ENCODE measurements at regions of chr5 and their contacts with region 1.

Region 1: DNA sequence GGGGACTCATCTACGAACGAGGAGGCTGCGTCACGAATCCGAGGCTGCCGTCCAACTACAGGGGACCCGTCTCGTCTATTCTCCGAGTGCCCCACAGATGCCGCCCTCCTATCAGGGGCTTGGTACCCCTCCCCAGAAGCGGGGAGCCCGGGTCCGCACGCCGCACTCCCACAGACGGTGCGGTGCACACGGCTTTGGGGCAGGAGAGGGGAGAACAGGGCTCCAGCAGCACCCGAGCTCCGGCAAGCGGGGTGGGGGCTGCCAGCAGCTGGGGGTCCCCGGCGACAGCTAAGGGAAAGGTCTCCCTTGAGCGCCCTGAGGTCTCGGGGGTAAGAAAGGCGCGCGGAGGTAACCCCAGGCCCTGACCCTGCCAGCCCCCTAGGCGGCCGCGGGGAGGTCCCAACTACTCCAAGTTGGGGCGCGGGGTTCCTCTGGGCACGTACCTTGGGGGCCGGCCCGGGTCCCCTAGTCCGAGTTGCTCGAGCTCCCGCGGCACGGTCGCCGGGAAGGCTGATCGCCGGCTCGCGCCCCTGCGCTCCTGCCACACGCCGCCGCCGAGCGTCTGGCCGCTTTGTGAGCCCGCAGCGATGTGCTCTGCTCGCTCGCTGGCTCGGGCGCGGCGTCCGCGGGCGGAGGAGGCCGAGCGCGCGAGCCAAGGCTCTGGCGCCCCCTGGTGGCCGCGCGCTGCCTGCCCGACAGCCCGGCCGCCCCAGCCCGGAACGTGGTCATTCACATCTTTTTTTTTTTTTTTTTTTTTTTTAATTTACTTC is at the start of gene SPOCK1:
- DNase-seq: peak; percentile 75 to 80
- ATAC-seq: peak; percentile 91 to 97
- H3K4me3 ChIP-seq: peak within 1 kb of the TSS; percentile 54
- H3K27ac ChIP-seq: peak within 1 kb of the TSS; percentile 60 to 83
- H3K4me1 ChIP-seq: no peaks in the 10 kb centered on the region
- CTCF ChIP-seq: peak; percentile 89
- EP300 ChIP-seq: no peak
- POLR2A ChIP-seq: no peak
- RAD21 ChIP-seq: peak; percentile 72 to 94
- polyA plus RNA-seq, gene SPOCK1: 33.8 and 40.8 TPM in 2 replicates

Region 2: GRCh38 chr5:137310051-137310730 is 188.7 kb before region 1 on chr5:
- CTCF ChIA-PET with region 1: interaction called, 11 read pairs
- POLR2A ChIA-PET with region 1: no interaction called
- DNase-seq: peak; percentile 44 to 72
- ATAC-seq: peak; percentile 71 to 81
- H3K4me3 ChIP-seq: no peak overlapping the region
- H3K27ac ChIP-seq: peak overlapping the region in 1 of 2 experiments; percentile 70; a peak in 3 of 6 replicates
- H3K4me1 ChIP-seq: peaks cover 35% of the 10 kb centered on the region
- CTCF ChIP-seq: no peak
- EP300 ChIP-seq: no peak
- POLR2A ChIP-seq: no peak
- RAD21 ChIP-seq: no peak

Region 3: GRCh38 chr5:137328463-137328862 is 170.5 kb before region 1 on chr5:
- CTCF ChIA-PET with region 1: interaction called, 28 read pairs
- POLR2A ChIA-PET with region 1: no interaction called
- DNase-seq: no peak
- ATAC-seq: no peak
- H3K4me3 ChIP-seq: no peak overlapping the region
- H3K27ac ChIP-seq: no peak overlapping the region
- H3K4me1 ChIP-seq: no peaks in the 10 kb centered on the region
- CTCF ChIP-seq: no peak
- EP300 ChIP-seq: no peak
- POLR2A ChIP-seq: no peak
- RAD21 ChIP-seq: no peak

Region 4: GRCh38 chr5:137352095-137352494 is 146.8 kb before region 1 on chr5:
- CTCF ChIA-PET with region 1: interaction called, 11 read pairs
- POLR2A ChIA-PET with region 1: no interaction called
- DNase-seq: no peak
- ATAC-seq: no peak
- H3K4me3 ChIP-seq: no peak overlapping the region
- H3K27ac ChIP-seq: no peak overlapping the region
- H3K4me1 ChIP-seq: no peaks in the 10 kb centered on the region
- CTCF ChIP-seq: no peak
- EP300 ChIP-seq: no peak
- POLR2A ChIP-seq: no peak
- RAD21 ChIP-seq: no peak

Region 5: DNA sequence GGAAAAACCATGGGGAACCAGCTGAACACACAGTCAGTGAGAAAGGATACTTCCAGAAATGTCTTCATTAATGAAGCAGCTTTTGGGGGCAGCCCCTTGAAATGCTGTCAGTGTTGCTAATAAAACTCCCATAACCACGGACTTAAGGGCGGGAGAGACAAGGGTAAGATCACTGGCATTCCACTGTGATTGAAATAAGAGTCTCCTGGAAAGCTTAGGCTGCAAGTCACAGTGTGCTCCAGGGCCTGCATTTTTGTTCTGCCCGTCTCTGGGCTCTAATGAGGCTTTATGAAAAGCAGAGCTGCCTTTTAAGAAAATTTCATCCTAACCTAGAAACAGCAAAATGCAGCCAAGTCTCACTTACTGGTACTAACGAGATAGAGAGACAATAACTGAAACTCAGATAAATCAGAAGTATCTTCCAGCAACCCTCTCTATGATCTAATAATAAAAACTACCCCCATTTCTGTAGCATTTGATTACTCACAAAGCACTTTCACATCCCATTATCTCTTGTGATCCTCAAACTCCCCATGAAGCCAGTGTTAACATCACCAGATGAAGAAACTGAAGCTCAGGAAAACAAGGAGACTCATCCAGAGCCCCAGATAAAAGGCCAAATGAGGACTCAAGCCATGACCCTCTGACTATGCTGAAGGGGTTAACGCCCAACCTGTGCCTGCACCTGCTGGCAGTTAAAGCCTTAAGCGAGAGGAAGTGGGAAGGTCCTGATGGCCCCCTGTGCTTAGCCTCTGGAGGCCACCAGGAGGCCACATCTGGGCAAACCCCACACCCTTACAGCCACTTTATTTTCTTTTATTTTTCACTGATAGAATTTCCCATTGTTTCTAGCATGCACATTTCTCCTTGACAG is 37.3 kb before region 1 on chr5:
- CTCF ChIA-PET with region 1: interaction called, 30 read pairs
- POLR2A ChIA-PET with region 1: no interaction called
- DNase-seq: no peak
- ATAC-seq: peak; percentile 68 to 70; a peak in 4 of 6 replicates
- H3K4me3 ChIP-seq: no peak overlapping the region
- H3K27ac ChIP-seq: no peak overlapping the region
- H3K4me1 ChIP-seq: no peaks in the 10 kb centered on the region; the same call in 2 of the 3 replicates
- CTCF ChIP-seq: no peak
- EP300 ChIP-seq: no peak
- POLR2A ChIP-seq: no peak
- RAD21 ChIP-seq: no peak